Psoas muscle (tissue), 8 donors: ENCODE measurements at regions of chr14 and their contacts with region 1.

Region 1: DNA sequence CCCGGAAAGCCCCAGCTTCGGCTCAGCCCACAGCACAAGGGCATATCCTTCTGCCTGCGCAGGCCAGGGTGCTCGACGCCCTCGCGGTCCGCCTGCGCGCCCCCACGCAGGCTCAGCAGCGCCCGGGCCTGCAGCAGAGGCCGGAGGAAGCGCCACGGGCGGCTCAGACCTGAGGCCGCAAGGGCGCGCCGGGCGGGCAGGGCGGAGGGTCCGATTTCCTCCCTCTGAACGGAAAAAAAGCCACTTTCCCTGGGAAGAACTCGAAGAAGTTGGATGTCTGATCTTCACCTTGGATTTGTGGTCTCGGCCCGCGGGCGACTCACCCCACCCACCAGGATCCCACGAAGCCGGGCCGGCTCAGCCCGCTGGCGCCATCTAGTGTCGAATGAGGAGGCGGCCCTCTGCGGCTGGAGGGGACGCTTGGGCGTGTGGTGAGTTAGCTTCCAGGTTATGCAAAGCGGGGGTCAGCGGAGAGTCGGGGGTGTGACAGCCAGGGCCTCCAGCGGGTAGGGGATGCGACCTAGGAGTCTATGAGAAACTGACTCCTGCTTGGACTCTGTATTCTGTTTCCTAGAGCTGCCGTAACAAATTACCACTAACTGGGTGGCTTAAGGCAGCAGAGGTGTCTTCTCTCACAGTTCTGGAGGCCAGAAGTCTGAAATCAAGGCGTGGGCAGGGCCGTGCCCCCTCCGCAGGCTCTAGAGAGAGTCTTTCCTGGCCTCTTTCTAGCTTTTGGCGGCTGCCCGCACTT is 40.0 kb upstream of the SRSF5 start:
- DNase-seq: peak; percentile 85 to 90
- ATAC-seq: peak; percentile 93 to 98 (median 94)
- H3K4me3 ChIP-seq: peak overlapping the region; percentile 66
- H3K27ac ChIP-seq: no peak overlapping the region
- H3K4me1 ChIP-seq: peaks cover 10% of the 10 kb centered on the region
- H3K27me3 ChIP-seq: no peaks in the 10 kb centered on the region
- CTCF ChIP-seq: peak; percentile 97

Region 2: DNA sequence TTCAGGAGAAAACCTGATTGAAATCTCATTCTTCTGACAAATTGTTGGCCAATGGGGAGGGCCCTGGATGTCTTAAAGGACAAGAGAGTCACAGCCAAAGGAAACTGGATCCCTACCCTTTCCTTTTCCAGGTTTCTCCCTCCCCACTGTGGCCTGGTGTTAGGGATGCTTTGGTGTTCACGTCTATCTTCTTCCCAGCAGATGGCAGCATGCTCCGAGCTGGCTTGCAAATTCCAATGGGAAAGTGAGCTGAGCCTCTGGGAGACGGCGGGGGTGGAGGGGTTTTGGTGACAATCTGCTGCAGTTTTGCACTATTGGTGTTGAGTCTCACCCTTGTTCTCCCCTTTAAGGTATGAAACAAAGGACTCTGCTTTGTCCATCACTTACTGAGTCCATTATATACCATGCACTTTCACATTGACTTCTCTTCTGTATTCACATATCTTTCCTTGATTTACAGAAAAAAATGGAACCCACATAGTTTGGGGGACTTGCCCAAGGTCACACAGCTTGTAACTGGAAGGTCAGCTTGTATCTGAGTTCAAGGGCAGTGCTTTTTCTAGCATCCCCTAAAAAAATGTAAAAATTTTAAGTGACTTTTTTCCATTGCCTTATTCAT is 191.6 kb before region 1 on chr14:
- intact Hi-C with region 1: loop called in 1 of 2 experiments (anchors 5 kb)
- DNase-seq: peak in 1 of 2 donors; percentile 30
- ATAC-seq: peak; percentile 56 to 76 (median 72)
- H3K4me3 ChIP-seq: no peak overlapping the region
- H3K27ac ChIP-seq: no peak overlapping the region
- H3K4me1 ChIP-seq: peaks cover 4% of the 10 kb centered on the region
- H3K27me3 ChIP-seq: no peaks in the 10 kb centered on the region
- CTCF ChIP-seq: peak; percentile 52

Region 3: GRCh38 chr14:69580009-69580577 is 146.8 kb before region 1 on chr14:
- intact Hi-C with region 1: loop called (anchors 1 to 5 kb)
- DNase-seq: no peak
- ATAC-seq: peak in 1 of 4 donors; percentile 20
- H3K4me3 ChIP-seq: no peak overlapping the region
- H3K27ac ChIP-seq: no peak overlapping the region
- H3K4me1 ChIP-seq: peaks cover 9% of the 10 kb centered on the region
- H3K27me3 ChIP-seq: peaks cover 0 to 23% (median 3%) of the 10 kb centered on the region in 3 donors
- CTCF ChIP-seq: peak; percentile 6

Region 4: GRCh38 chr14:69586404-69586803 is 140.5 kb before region 1 on chr14:
- intact Hi-C with region 1: loop called (anchors 1 to 5 kb)
- DNase-seq: no peak
- ATAC-seq: no peak
- H3K4me3 ChIP-seq: no peak overlapping the region
- H3K27ac ChIP-seq: no peak overlapping the region
- H3K4me1 ChIP-seq: peaks cover 9% of the 10 kb centered on the region
- H3K27me3 ChIP-seq: no peaks in the 10 kb centered on the region
- CTCF ChIP-seq: no peak

Region 5: GRCh38 chr14:69605738-69606137 is 121.2 kb before region 1 on chr14:
- intact Hi-C with region 1: loop called (anchors 1 to 2 kb)
- DNase-seq: no peak
- ATAC-seq: no peak
- H3K4me3 ChIP-seq: no peak overlapping the region
- H3K27ac ChIP-seq: no peak overlapping the region
- H3K4me1 ChIP-seq: peaks cover 9% of the 10 kb centered on the region
- H3K27me3 ChIP-seq: no peaks in the 10 kb centered on the region
- CTCF ChIP-seq: no peak